Thyroid gland (tissue), 4 donors: ENCODE measurements at regions of chr9 and their contacts with region 1.

Region 1: DNA sequence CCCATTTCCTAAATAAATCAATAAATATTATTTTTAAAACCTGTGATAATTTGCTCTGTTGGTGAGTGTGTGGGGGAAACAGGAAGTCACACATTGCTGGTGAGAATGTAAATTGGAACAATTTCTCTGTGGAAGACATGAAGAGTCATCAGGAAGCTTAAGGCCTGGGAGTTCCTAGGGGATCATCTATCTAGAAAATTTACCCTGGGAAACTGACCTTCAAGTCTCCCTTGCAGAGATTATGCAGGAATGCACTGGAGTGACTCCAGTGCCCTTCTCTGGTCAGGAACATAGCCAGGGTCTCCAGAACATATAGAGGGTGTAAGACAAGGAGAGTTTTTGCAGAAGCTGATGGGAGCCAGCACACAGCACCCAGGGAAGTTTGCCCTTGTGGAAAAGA is 13.0 kb upstream of the GCNT1 start:
- DNase-seq: no peak
- H3K4me3 ChIP-seq: no peak overlapping the region
- H3K27ac ChIP-seq: no peak overlapping the region
- H3K4me1 ChIP-seq: no peaks in the 10 kb centered on the region
- H3K27me3 ChIP-seq: no peaks in the 10 kb centered on the region
- CTCF ChIP-seq: no peak
- POLR2A ChIP-seq: no peak

Region 2: GRCh38 chr9:76537150-76537646 is 91.2 kb after region 1 on chr9:
- intact Hi-C with region 1: no loop called
- DNase-seq: peak; percentile 79 to 86
- H3K4me3 ChIP-seq: no peak overlapping the region
- H3K27ac ChIP-seq: peak overlapping the region; percentile 61 to 85 (median 72)
- H3K4me1 ChIP-seq: peaks cover 18 to 38% of the 10 kb centered on the region in 2 donors
- H3K27me3 ChIP-seq: no peaks in the 10 kb centered on the region
- CTCF ChIP-seq: no peak
- POLR2A ChIP-seq: peak in 1 of 2 donors; percentile 14

Region 3: DNA sequence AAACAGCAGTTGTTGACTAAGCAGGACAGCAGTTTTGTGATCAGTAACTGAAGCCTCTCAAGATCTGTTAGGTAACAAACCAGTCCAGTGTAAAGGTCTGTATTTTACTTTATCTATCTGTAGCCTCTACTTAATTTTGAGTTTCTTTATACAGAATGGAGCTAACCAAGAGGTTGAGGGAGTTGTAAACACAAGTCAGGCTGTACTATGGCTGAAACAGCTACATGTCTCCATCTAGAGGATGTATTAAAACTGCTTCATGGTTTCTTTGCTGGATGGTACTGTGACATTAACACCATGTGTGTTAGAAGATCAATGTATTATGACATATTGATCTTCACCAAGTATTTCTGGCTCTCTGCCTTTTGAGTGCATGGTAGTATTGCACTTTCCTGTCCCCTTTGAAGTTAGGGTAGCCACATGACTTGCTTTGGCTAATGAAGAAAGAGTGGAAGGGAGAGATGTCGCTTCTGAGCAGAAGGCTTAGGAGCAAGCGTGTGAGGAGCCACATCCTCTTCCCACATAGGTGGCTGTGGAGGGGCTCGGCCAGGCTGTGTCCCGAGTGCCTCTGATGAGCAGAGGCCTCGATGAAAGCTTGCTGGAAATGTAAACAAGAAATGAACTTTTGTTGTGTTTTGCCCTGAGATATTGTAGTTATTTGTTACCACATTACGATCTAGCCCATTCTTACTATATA is 212.7 kb after region 1 on chr9:
- intact Hi-C with region 1: loop called (anchors 2 kb)
- DNase-seq: no peak
- H3K4me3 ChIP-seq: no peak overlapping the region
- H3K27ac ChIP-seq: no peak overlapping the region
- H3K4me1 ChIP-seq: peaks cover 7 to 22% of the 10 kb centered on the region in 2 donors
- H3K27me3 ChIP-seq: no peaks in the 10 kb centered on the region
- CTCF ChIP-seq: peak; percentile 31 to 93 (median 72)
- POLR2A ChIP-seq: no peak

Region 4: DNA sequence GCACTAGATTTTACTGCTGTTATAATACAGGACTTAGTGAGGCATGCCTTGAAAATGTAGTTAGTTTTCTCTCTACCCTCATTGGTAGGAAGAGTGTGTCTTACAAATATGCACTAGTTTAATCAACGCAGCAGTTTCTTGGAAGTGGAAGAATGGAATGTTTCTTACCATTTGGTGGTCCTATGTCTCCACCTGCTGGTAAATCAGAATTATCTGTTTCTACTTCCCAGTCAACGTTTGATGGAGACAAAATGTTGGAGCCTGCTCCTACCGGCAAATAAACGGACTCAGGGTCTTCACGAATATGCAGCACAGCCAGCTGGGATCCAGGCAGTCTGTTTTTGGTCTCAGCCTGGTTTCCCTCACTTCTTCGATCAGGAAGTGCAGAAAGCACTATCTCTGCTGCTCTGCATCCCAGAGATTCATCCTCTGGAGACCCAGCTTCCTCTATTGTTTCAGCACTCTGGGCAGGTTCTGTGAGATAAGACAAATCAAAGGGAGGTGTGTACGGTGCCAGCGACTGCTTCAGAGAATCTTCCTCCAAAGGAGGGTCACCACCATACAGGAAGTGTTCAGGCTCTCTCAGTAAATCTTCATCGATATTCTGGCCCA is 258.7 kb after region 1 on chr9:
- intact Hi-C with region 1: loop called (anchors 2 kb)
- DNase-seq: no peak
- H3K4me3 ChIP-seq: no peak overlapping the region
- H3K27ac ChIP-seq: no peak overlapping the region
- H3K4me1 ChIP-seq: no peaks in the 10 kb centered on the region
- H3K27me3 ChIP-seq: no peaks in the 10 kb centered on the region
- CTCF ChIP-seq: peak; percentile 33 to 89 (median 66)
- POLR2A ChIP-seq: no peak

Region 5: GRCh38 chr9:76882686-76883085 is 436.7 kb after region 1 on chr9:
- intact Hi-C with region 1: no loop called
- DNase-seq: no peak
- H3K4me3 ChIP-seq: no peak overlapping the region
- H3K27ac ChIP-seq: no peak overlapping the region
- H3K4me1 ChIP-seq: no peaks in the 10 kb centered on the region
- H3K27me3 ChIP-seq: no peaks in the 10 kb centered on the region
- CTCF ChIP-seq: no peak
- POLR2A ChIP-seq: no peak